PC-3 (cell line): ENCODE measurements at regions of chr9 and their contacts with region 1.

Region 1: DNA sequence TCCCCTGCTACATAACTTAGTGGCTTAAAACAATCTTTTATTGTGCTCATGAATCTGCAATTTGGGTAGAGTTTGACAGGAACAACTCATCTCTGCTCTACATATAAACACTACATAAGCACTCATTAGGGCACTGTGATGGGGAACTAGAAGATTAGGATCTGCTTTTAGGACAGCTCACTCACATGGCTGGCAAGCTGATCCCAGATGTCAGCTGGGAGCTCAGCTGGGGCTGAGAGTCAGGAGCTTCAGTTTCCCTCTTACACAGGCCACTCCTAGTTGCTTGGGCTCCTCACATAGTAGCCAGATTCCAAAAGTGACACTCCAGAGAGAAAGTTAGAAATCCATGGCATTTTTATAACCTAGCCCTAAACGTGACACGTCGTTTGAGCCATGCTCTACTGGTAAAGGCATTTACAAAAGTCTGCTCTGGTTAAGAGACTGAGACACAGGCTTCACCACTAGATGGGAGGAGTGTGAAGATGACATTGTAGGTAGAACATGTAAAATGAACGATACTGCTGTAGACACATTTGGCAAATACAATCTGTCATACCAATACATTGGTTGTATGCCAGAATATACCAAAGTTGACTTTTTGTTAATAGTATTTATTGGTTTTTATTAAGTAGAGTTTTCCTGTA is 23.6 kb downstream of the SCAI start:
- DNase-seq: no peak
- ATAC-seq: no peak
- H3K4me3 ChIP-seq: no peak overlapping the region
- H3K27ac ChIP-seq: no peak overlapping the region
- H3K4me1 ChIP-seq: 0 out of 2 replicates have a peak, but pooled peaks cover 6% of the 10 kb centered on the region
- H3K27me3 ChIP-seq: no peaks in the 10 kb centered on the region
- CTCF ChIP-seq: no peak

Region 2: DNA sequence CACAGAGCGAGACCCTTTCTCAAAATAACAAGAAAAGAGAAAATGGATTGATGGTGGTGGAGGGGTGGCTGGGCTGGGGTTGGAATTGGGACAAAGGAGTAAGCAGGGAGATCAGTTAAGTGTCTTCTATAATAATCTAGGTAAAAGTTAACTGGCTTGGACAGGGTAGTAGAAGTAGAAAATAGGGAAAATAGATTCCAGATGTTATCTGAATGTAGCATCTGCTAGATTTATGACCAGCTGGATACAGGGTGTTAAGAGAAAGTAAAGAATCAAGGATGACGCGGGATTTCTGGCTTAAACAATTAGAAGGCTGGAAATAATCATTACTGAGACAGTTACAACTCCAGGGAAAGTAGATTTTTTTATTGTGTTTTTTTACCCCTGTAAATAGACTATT is 56.9 kb after region 1 on chr9:
- CTCF ChIA-PET with region 1: no interaction called
- POLR2A ChIA-PET with region 1: interaction called, 10 read pairs
- intact Hi-C with region 1: no loop called
- DNase-seq: no peak
- ATAC-seq: no peak
- H3K4me3 ChIP-seq: no peak overlapping the region
- H3K27ac ChIP-seq: no peak overlapping the region
- H3K4me1 ChIP-seq: no peaks in the 10 kb centered on the region
- H3K27me3 ChIP-seq: no peaks in the 10 kb centered on the region
- CTCF ChIP-seq: no peak

Region 3: DNA sequence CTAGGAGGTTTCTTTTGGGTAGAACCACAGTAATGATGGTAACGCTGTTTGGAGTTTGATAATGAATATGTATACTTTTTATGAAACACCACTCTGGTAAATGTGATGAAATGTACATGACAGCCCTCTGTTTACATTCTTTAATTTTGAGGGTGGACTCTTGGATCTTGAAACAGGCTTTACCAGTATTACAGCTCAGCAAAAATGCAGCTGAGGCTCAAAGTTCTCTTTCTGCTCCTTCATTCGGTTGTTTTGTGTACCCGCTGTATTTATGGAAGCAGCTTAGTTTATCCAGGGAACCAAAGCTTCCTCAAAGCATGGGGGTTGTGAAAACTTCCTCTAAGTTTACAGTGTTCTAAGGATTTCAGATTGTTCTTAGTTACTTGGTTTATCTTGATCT is 152.9 kb after region 1 on chr9:
- CTCF ChIA-PET with region 1: no interaction called
- POLR2A ChIA-PET with region 1: no interaction called
- intact Hi-C with region 1: no loop called
- DNase-seq: peak; percentile 68
- ATAC-seq: peak; percentile 15; the same call in 1 of the 2 replicates
- H3K4me3 ChIP-seq: no peak overlapping the region; the same call in 1 of the 2 replicates
- H3K27ac ChIP-seq: no peak overlapping the region
- H3K4me1 ChIP-seq: peaks cover 13% of the 10 kb centered on the region
- H3K27me3 ChIP-seq: no peaks in the 10 kb centered on the region
- CTCF ChIP-seq: no peak